GM13977 (cell line): ENCODE measurements at regions of chr19 and their contacts with region 1.

Region 1: GRCh38 chr19:47247329-47247886 is 8.9 kb upstream of the CCDC9 start:
- DNase-seq: peak; percentile 73
- CTCF ChIP-seq: peak; percentile 91

Region 2: DNA sequence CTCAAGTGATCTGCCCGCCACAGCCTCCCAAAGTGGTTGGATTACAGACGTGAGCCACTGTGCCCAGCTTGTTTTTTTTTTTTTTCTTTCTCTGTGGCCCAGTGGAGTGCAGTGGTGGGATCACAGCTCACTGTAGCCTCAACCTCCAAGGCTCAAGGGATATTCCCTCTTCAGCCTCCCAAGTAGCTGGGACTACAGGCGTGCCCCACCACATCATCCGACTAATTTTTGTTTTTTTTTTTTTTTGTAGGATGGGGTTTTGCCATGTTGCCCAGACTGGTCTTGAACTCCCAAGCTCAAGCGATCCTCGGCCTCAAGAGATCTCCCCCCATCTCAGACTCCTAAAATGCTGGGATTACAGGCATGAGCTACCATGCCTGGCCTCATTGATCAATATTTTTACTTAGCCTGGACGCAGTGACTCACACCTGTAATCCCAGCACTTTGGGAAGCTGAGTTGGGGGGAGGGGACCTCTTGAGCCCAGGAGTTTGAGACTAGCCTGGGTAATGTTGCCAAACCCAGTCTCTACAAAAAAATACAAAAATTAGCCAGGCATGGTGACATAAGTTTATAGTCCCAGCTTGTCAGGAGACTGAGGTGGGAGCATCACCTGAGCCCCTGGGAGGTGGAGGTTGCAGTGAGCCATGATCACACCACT is 115.1 kb before region 1 on chr19:
- in situ Hi-C with region 1: no loop called
- DNase-seq: no peak
- CTCF ChIP-seq: no peak

Region 3: GRCh38 chr19:47145639-47146486 is 101.5 kb before region 1 on chr19:
- in situ Hi-C with region 1: loop called (anchors 5 kb)
- DNase-seq: no peak
- CTCF ChIP-seq: no peak